Prostate gland (tissue), 2 donors: ENCODE measurements at regions of chr10 and their contacts with region 1.

Region 1: DNA sequence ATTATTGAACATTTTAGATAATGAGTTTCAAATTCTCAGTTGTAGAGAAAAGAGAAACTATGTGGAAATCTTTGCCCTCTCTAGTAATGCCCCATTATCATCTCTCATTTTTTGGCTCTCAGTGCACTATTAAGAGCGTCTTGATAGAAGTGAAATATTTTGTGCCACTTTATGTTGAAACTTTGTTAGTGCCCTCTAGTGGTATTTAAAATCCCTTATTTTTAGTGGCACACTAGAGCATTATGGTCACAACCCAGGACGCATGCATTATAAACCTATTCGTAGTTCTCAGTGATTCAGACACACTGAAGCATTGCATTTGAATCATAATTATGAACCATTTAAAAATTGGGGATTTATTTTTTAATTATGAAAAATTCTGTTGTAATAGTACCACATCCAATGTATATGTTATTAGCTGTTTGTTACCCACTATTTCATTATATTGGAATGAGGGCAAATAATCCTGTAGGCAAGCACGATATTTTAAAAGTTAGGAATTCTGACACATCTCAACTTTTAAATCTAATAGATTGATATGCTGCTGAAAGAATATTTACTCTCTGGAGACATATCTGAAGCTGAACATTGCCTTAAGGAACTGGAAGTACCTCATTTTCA is 21.9 kb downstream of the PDCD4 start:
- DNase-seq: no peak
- H3K4me3 ChIP-seq: no peak overlapping the region
- H3K27ac ChIP-seq: no peak overlapping the region
- H3K4me1 ChIP-seq: peaks cover 7% of the 10 kb centered on the region
- H3K27me3 ChIP-seq: no peaks in the 10 kb centered on the region
- CTCF ChIP-seq: peak; percentile 47 to 76 (median 72)
- POLR2A ChIP-seq: no peak

Region 2: DNA sequence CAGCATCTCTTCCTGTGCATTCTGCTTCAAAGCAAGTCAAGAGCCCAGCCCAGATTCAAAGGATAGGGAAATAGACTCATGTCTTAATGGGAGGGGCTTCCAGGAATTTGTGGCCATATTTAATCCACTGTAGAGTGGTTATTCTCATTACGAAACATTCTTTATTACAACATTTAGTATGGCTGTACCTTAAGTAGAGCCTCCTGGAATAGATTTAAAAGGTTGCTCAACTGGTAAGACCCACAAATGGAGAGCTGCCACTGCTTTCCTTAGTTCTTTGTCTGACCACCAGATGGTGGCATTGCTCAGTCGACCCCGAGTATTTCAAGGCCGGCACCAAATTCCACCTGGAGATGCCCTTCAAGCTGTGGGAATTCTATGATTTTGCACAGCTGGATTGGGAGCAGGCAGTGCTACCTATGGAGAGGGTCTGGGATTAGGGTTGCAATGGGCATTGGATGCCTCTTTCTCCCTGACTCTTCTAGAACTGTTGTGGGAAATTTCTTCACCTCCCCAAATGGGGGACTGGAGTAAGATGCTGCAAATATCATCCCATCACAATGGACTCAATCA is 147.3 kb before region 1 on chr10:
- intact Hi-C with region 1: loop called (anchors 5 kb)
- DNase-seq: peak; percentile 73
- H3K4me3 ChIP-seq: no peak overlapping the region
- H3K27ac ChIP-seq: no peak overlapping the region
- H3K4me1 ChIP-seq: no peaks in the 10 kb centered on the region
- H3K27me3 ChIP-seq: no peaks in the 10 kb centered on the region
- CTCF ChIP-seq: peak; percentile 75 to 89 (median 83)
- POLR2A ChIP-seq: no peak